OCI-LY7 (cell line): ENCODE measurements at regions of chr2 and their contacts with region 1.

Region 1: GRCh38 chr2:25567406-25567805 is 106.0 kb downstream of the DTNB start:
- DNase-seq: peak; percentile 75
- H3K4me3 ChIP-seq: no peak overlapping the region
- H3K27ac ChIP-seq: peak overlapping the region; percentile 65
- H3K4me1 ChIP-seq: peaks cover 52% of the 10 kb centered on the region
- CTCF ChIP-seq: peak; percentile 91

Region 2: DNA sequence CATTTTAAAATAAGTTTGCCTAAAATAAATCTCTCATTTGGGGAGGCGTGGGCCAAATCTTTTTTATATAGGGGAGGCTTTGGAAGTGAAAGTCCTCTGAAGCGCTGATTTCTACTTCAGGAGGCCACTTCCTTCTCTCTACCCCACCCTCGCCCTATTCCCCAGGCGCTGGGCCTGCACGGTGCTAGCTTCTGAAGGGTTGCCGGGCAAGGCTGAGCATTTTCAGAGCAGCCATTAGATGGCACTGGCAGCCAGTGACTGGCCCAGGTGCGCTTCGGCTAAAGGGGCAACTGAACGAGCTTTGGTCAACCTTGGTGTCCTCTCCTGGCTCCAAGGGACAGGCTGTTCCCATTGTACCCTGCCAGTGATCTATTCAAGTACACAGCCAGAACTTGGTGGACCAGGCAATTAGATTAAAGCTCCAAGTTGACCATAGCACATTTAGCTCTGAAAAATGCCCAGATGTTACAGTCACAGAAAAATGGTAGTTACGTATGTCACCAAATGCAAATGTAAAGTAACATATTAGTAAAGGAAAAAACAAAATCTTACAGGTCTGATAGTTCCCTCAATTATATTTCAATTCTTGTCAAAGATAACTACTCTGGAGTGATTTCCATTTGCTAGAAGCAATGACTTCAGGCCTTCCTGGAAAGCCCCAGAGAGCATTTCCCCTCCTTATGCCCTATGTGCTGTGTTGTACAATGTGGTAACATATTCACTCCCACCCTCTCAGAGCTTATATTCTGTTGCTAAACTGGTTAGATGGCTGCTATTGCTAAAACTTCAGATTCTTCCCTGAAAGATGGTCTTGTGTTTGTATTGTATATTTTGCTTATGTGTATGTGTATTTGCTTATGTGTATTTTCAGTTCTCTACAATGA is 401.2 kb before region 1 on chr2:
- CTCF ChIA-PET with region 1: no interaction called
- POLR2A ChIA-PET with region 1: no interaction called
- intact Hi-C with region 1: loop called (anchors 2 kb)
- DNase-seq: peak; percentile 79
- H3K4me3 ChIP-seq: no peak overlapping the region
- H3K27ac ChIP-seq: no peak overlapping the region
- H3K4me1 ChIP-seq: peaks cover 5% of the 10 kb centered on the region
- CTCF ChIP-seq: peak; percentile 85

Region 3: DNA sequence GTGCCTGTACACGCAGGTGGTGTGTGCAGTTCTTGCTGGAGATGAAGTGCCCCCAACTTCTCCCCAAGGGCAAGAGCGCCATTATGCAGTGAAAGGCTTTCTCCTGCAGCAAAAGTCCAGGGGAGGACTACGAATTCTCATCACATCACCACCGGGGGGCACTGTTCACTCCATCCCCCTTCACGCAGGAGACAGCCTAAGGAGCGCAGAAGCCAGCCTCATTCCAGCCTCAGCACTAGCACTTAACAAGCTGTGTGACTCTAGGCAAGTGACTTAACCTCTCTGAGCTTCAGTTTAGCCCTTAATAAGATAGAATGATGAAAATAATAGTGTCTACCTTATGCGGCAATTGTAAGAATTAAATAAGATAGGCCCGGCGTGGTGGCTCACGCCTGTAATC is 258.0 kb before region 1 on chr2:
- CTCF ChIA-PET with region 1: interaction called, 3 read pairs
- POLR2A ChIA-PET with region 1: no interaction called
- intact Hi-C with region 1: loop called (anchors 1 kb)
- DNase-seq: peak; percentile 77
- H3K4me3 ChIP-seq: no peak overlapping the region
- H3K27ac ChIP-seq: no peak overlapping the region
- H3K4me1 ChIP-seq: peaks cover 6% of the 10 kb centered on the region
- CTCF ChIP-seq: peak; percentile 80

Region 4: DNA sequence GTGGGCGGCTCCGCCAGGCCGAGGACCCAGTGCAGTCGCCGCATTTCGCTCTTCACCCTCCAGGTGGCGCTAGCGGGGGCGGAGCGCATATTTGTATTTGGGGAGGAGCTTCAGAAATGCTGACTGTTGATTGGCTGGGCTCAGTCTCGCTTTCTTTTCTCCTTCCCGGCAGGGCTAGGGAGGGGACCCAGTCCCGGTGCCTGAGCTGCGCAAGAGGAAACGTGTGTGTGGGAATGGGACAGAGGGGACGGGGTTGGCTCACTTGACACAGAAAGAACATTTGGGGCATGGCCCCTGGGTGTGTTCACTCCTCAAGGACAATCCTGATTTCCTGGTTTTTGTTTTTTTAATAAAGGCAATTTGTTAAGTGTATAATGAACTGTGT is 205.4 kb before region 1 on chr2:
- CTCF ChIA-PET with region 1: interaction called, 11 read pairs
- POLR2A ChIA-PET with region 1: interaction called, 5 read pairs
- intact Hi-C with region 1: no loop called
- DNase-seq: peak; percentile 93
- H3K4me3 ChIP-seq: peak overlapping the region; percentile 66
- H3K27ac ChIP-seq: peak overlapping the region; percentile 66
- H3K4me1 ChIP-seq: peaks cover 23% of the 10 kb centered on the region
- CTCF ChIP-seq: peak; percentile 95

Region 5: DNA sequence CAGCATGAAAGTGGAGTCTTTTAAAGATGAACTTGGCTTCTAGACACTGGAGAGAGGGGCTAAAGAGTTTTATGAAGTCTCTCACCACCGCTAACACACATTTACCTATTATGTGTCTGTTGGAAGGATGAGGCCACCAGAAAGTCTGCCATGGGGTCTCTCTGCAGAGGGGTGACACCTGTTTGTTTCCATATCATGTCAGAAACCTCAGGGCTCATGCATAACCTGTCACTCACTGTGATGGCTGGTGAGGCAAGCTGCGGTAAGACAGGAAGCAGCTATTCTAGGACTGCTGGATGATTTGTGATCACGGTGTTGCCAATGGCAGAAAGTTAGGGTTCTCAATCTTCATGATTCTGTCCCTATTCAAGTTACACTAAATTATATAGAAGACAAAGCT is 164.9 kb before region 1 on chr2:
- CTCF ChIA-PET with region 1: no interaction called
- POLR2A ChIA-PET with region 1: no interaction called
- intact Hi-C with region 1: loop called (anchors 5 kb)
- DNase-seq: peak; percentile 96
- H3K4me3 ChIP-seq: peak overlapping the region; percentile 39
- H3K27ac ChIP-seq: peak overlapping the region; percentile 97
- H3K4me1 ChIP-seq: peaks cover 99% of the 10 kb centered on the region
- CTCF ChIP-seq: no peak

Region 6: GRCh38 chr2:25521665-25522387 is 45.6 kb before region 1 on chr2:
- CTCF ChIA-PET with region 1: interaction called, 3 read pairs
- POLR2A ChIA-PET with region 1: interaction called, 3 read pairs
- intact Hi-C with region 1: loop called (anchors 1 kb)
- DNase-seq: peak; percentile 89
- H3K4me3 ChIP-seq: peak overlapping the region; percentile 42
- H3K27ac ChIP-seq: peak overlapping the region; percentile 56
- H3K4me1 ChIP-seq: peaks cover 38% of the 10 kb centered on the region
- CTCF ChIP-seq: peak; percentile 99

Region 7: DNA sequence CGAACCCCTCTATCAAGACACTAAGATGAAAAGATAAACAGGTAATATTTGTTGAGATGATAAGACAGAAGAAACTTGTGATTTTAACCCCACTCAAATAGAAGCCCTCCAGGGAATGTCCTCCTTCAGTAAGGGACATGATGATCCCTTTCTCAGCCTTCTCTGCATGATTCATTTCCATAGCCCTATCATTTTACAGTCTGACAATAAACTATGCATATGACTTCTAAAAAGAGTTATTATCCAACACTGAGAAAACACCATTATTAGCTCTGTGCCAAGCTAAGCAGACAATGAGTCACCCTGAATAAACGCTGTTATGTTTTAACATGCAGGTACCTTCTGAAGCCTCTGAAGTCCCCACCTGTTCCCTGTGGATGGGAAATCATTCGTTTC is 51.2 kb after region 1 on chr2:
- CTCF ChIA-PET with region 1: no interaction called
- POLR2A ChIA-PET with region 1: no interaction called
- intact Hi-C with region 1: no loop called
- DNase-seq: no peak
- H3K4me3 ChIP-seq: no peak overlapping the region
- H3K27ac ChIP-seq: no peak overlapping the region
- H3K4me1 ChIP-seq: no peaks in the 10 kb centered on the region
- CTCF ChIP-seq: no peak

Region 8: GRCh38 chr2:25651071-25651470 is 83.7 kb after region 1 on chr2:
- CTCF ChIA-PET with region 1: no interaction called
- POLR2A ChIA-PET with region 1: no interaction called
- intact Hi-C with region 1: no loop called
- DNase-seq: no peak
- H3K4me3 ChIP-seq: no peak overlapping the region
- H3K27ac ChIP-seq: no peak overlapping the region
- H3K4me1 ChIP-seq: no peaks in the 10 kb centered on the region
- CTCF ChIP-seq: no peak